ENCODE measurements at regions of chr7 and their contacts with region 1.

Region 1: DNA sequence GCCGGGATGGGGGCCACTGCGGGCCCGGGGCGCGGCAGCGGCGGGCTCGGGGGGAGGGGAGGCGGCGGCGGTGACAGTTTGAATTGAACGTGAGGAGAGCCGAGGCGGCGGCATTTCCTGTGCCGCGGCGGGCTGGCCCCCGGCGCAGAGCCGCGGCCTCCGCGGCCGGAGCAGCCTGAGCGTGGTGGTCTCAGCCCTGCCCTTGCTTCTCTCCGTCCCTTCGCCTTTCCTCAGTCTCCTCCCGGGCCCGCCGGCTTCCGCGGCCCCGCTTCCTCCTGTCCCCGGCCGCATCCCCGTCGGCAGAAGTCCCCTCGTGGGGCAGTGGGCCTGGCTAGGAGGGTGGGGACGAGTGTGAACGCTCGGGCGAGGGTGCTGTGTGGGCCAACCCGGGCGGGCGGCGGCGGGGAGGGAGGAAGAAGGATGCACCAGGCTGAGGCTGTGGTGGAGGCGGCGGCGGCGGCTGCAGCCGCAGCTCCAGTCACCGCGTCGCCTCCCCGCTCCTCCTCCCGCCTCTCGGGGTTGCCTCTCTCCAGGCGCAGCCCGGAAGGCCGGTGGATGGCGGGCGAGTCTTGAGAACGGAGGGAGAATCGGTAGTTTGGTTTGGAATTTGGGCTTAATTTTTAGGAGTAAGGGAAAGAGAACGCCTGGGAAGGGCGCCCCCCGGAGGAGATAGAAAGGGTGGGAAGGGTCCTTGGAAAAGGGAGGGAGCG is 690 bp downstream of the SEPTIN7 start:
- DNase-seq: peak; percentile 64 to 84 (median 76)
- H3K4me3 ChIP-seq: peak overlapping the region; percentile 98
- H3K27ac ChIP-seq: peak overlapping the region; percentile 89 to 91
- H3K4me1 ChIP-seq: peaks cover 7% of the 10 kb centered on the region
- H3K27me3 ChIP-seq: no peaks in the 10 kb centered on the region
- CTCF ChIP-seq: peak; percentile 40 to 54 (median 53)
- EP300 ChIP-seq: no peak
- POLR2A ChIP-seq: peak; percentile 20

Region 2: GRCh38 chr7:35707422-35707821 is 94.1 kb before region 1 on chr7:
- intact Hi-C with region 1: loop called (anchors 2 to 10 kb)
- DNase-seq: no peak
- H3K4me3 ChIP-seq: no peak overlapping the region
- H3K27ac ChIP-seq: no peak overlapping the region
- H3K4me1 ChIP-seq: peaks cover 2% of the 10 kb centered on the region
- H3K27me3 ChIP-seq: no peaks in the 10 kb centered on the region
- CTCF ChIP-seq: no peak
- EP300 ChIP-seq: no peak
- POLR2A ChIP-seq: no peak

Region 3: DNA sequence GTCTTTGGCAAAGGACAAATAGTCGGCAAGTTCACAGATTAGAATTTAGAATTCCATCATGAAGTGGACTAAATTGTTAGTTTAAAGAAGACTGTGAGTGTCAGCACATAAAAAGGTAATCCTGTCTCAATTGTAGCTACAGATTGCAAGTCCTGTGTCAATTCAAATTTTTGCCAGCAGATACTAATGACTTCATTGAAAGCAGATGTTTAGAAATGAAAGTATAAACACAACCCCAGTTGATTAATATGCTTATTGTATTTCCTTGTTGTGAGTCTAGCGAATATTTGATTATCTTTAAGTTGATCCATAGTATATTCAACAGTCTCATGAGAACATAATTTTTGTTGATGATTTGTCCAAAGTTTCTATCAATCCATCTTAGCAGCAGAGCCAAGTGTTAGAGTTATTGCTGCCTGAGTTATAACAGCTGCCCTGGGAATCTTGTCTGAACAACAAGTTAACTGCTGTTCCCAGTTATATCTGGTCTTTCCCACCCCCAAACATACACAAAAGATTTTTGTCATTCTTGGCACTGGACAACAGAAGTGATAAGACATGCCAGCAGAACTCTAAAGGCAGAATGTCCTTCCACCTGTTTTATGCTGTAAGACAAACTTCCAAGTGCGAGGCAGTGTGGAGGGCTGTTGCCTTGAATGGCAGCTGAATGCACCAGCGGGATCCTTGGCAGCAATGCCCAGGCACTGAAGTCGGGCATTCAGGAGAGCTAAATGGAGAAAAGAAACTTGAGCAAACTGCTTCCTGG is 85.3 kb before region 1 on chr7:
- intact Hi-C with region 1: loop called in 1 of 4 experiments (anchors 10 kb)
- DNase-seq: no peak
- H3K4me3 ChIP-seq: no peak overlapping the region
- H3K27ac ChIP-seq: peak overlapping the region in 1 of 2 donors; percentile 35
- H3K4me1 ChIP-seq: peaks cover 5% of the 10 kb centered on the region
- H3K27me3 ChIP-seq: no peaks in the 10 kb centered on the region
- CTCF ChIP-seq: no peak
- EP300 ChIP-seq: no peak
- POLR2A ChIP-seq: no peak

Region 4: DNA sequence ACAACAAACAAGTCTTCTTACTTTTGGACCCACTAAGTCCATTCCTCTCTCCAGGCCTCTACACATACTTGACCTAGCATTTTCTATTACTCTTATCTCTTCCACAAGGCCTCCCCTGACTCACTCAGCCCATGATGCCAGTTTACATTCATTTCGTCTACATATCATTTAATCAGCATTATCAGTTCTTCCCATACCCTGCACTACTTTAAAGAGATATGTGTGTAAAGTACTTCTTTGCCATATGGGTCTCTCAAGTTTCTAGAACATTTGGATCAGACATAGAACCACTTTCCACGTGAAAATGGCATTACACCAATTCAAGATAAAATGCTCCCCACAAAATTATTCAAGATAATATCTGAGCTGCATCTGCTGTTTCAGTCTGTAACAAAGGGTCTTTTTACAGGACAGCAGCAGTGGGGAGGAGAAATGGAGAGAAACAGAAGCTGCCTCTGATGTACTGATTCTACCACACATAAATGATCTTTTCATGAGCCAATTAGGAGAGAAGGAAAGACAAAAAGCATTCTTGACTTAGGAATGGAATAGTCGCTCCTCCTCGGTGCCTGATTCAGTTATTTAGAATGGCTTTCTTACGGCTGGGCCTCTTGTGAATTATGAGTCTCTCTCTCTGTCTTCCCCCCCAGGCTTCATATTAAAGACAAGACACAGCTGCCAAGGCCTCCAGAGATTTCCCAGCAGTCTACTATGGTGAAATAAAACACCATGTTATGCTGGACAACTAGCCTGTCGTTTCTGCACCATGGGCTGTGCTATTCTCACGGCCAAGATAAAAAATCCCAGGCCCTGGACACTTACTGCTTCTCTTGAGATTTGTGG is 47.6 kb before region 1 on chr7:
- intact Hi-C with region 1: loop called in 1 of 4 experiments (anchors 2 kb)
- DNase-seq: peak; percentile 40 to 78 (median 53)
- H3K4me3 ChIP-seq: no peak overlapping the region
- H3K27ac ChIP-seq: peak overlapping the region in 1 of 2 donors; percentile 71
- H3K4me1 ChIP-seq: peaks cover 21% of the 10 kb centered on the region
- H3K27me3 ChIP-seq: no peaks in the 10 kb centered on the region
- CTCF ChIP-seq: no peak
- EP300 ChIP-seq: no peak
- POLR2A ChIP-seq: no peak

Region 5: DNA sequence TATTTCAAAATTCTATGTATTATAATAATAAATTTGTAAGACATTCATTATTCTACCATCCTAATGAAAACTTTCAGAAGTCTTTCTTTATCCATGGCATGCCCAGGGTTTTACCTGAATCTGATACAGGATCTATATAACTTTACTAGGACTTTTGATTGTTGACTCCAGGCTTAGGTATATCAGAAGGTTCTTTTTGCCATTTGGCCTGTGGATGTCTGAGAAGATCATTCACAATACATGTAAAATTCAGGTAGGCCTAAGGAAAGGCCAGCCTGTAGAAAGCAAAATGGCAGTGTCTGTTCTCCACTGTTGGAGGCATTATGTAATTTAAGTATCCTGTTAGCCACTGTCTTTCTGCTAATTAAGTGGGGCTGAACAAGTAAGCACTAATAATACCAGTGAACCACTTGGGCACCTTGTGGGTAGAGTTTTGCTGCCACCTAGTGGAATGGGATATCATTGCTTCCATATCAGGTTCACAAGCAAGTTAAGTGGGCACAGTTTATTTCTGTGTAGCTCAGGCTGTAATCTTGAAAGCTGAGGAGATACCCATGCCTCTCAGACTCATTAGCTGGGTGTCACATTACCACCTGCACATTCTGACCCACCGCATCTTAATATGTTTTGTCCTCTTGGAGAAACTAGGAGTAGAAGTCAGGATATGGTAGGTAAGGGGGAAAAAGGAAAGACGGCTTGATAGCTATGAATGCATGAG is 104.8 kb after region 1 on chr7:
- intact Hi-C with region 1: loop called in 2 of 4 experiments (anchors 5 to 10 kb)
- DNase-seq: peak in 4 of 5 donors; percentile 47 to 76 (median 56)
- H3K4me3 ChIP-seq: no peak overlapping the region
- H3K27ac ChIP-seq: no peak overlapping the region
- H3K4me1 ChIP-seq: peaks cover 1% of the 10 kb centered on the region
- H3K27me3 ChIP-seq: no peaks in the 10 kb centered on the region
- CTCF ChIP-seq: peak; percentile 86 to 94 (median 92)
- EP300 ChIP-seq: no peak
- POLR2A ChIP-seq: no peak

Region 6: GRCh38 chr7:36852017-36852416 is 1050.5 kb after region 1 on chr7:
- intact Hi-C with region 1: no loop called
- DNase-seq: no peak
- H3K4me3 ChIP-seq: no peak overlapping the region
- H3K27ac ChIP-seq: no peak overlapping the region
- H3K4me1 ChIP-seq: no peaks in the 10 kb centered on the region
- H3K27me3 ChIP-seq: no peaks in the 10 kb centered on the region
- CTCF ChIP-seq: no peak
- EP300 ChIP-seq: no peak
- POLR2A ChIP-seq: no peak

Measured in ovary (tissue), 10 donors.